ENCODE measurements at regions of chr11 and their contacts with region 1.

Region 1: DNA sequence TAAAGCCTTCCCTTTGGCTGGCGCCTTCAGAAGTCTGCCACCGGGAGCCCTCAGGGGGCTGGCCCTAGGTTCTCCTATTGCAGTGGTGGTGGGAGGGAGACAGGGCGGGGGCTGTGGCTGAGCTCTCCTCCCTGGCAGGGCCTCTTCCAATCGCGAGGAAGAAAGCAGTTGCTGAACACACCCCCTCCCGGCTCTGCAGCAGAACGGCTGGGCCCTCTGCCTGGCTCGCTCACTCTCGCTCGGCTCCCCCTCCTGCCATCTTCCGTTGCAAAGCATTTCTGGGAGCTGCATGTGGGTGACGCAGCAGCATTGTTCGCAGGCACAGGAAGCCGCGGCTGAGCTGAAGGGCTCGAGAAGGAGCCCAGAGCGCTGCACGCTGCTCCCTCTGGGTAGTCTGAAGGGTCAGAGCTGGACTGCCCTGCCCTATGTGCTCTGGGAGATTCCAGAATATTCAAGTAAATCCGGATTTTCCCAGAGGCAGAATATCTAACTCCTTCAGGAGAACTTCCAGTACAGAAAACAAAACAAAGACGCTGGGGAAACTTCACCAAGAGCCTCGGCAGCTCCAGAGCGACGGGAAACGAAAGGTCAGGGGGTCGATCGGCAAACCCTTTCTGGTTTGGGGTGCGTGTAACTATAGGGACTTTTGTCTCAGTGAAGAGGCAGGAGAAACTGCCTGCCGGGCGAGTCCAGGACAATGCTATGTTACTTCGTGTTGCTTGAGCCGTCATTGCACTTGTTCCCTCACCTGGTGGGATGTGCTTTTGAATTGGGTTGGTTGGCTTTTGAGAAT is 26.3 kb upstream of the GRK2 start:
- DNase-seq: peak; percentile 99
- H3K4me3 ChIP-seq: peak overlapping the region; percentile 44 to 71 (median 56)
- H3K27ac ChIP-seq: peak overlapping the region; percentile 89 to 98 (median 90)
- H3K4me1 ChIP-seq: peaks cover 0 to 56% (median 53%) of the 10 kb centered on the region in 4 donors
- H3K27me3 ChIP-seq: no peaks in the 10 kb centered on the region
- CTCF ChIP-seq: no peak
- EP300 ChIP-seq: peak in 1 of 4 donors; percentile 24
- POLR2A ChIP-seq: peak; percentile 86 to 93

Region 2: DNA sequence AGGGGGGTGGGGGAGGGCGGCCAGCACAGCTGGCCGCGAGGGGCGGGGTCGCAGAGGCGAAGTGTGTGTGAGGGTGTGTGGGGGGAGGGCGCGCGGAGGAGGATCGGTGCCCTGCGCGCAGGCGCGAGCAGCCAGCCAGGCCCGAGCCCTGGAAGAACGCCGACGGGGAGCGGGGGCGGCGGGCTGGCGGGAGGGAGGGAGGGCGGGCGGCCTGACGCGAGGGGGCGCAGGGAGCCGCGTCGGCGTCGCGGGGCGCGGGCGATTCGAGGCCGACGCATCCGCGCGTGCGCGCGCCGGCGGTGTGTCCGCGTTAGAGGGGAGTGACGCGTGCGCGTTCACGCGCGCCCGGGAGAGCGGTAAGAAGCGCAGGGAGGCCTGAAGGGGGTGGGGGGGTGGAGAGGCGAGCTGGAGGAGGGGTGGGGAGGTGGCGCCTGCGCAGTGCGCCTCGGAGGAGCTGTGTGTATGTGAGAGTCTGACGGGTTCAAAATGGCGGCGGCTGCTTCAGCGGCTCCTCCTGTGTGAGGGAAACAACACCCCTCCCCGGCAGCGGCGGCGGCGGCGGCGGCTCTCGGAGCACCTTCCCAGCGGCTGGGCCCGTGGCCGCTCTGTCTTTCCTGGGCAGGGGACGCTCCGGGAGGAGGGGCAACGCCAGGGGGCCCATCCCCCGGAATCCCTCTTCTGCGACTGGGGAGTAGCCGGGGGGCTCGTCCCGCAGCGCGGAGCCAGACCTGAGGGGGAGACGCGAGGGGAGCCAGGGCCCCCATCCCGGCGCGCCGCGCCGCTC is 121.0 kb before region 1 on chr11 and contains the start of gene KDM2A:
- intact Hi-C with region 1: loop called (anchors 2 kb)
- DNase-seq: peak; percentile 100
- H3K4me3 ChIP-seq: peak within 1 kb of the TSS; percentile 78 to 97 (median 96)
- H3K27ac ChIP-seq: peak within 1 kb of the TSS; percentile 94 to 99 (median 98)
- H3K4me1 ChIP-seq: peaks cover 0 to 44% (median 39%) of the 10 kb centered on the region in 4 donors
- H3K27me3 ChIP-seq: no peaks in the 10 kb centered on the region
- CTCF ChIP-seq: no peak
- EP300 ChIP-seq: peak in 1 of 4 donors; percentile 37
- POLR2A ChIP-seq: peak; percentile 38 to 43
- total RNA-seq, gene KDM2A: 25.0 to 67.3 (median 35.7) TPM